Ovary (tissue), 10 donors: ENCODE measurements at regions of chr13 and their contacts with region 1.

Region 1: DNA sequence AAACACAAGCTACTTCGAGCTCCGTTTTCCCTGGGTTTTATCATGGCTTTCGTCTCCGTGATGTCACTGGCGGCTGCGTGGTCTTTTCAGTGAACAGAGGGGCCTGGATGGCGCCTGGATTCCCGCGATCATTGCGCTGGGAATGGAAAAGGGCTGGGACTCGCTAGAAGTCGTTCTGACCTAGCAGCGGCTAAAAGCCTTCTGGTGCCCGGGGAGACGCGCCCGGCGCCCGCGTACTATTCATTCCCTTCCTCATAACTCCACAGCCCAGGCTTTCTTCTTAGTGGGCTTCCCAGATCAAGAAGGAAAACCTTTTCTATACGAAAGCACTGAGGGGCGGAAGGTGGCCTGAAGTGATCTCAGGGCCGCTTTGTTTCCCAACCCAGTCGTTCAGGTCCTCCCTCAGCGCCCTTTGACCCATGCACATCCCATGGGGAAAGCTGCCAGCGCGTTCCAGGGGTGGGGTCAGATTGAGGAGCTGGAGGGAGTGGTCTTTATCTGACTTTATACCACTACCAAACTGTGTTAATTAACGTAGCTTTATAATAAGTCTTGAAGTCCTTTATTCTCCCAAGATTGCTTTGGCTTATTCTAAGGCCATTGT is 96.6 kb downstream of the ELF1 start:
- DNase-seq: peak; percentile 20 to 50 (median 41)
- H3K4me3 ChIP-seq: no peak overlapping the region
- H3K27ac ChIP-seq: no peak overlapping the region
- H3K4me1 ChIP-seq: no peaks in the 10 kb centered on the region
- H3K27me3 ChIP-seq: no peaks in the 10 kb centered on the region
- CTCF ChIP-seq: no peak
- EP300 ChIP-seq: no peak
- POLR2A ChIP-seq: no peak

Region 2: DNA sequence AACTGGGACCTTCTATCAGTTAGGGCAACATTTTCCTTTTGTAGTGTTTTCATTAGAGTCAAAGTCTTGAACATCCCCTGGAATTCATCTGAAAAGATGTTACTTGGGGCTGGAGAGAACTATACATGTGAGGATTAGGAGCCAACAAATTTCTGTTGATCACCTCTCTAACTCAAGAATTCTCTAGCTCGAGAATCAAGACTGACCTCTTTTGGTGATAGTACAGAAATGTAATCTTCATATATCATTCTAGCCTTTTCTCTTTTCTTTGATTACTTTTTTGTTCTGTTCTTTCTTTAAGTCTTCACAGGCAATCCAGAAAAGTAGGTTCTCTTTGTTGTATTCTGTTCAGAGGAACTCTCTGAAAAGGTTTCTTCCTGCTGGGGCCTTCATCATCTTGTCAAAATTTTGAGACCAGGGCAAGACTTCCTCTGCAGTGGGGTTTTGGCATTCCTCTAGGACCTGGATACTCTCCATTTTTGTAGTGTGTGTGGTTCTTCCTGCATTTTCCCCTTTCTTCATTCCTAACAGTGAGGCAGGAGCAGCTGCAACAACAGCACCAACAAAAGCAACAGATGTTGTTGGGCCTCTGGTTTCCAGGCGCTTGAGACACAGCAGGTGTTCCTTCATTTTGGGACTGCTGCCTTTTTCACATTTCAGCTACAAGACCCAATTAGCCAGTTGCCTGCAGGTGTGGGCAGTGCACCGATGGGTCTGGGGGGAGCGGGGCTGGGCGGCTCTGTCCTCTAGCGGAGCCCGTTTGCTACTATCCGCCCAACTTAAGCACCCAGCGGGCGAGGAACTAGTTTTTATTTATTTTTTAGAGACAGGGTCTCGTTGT is 70.4 kb after region 1 on chr13:
- intact Hi-C with region 1: loop called in 1 of 4 experiments (anchors 10 kb)
- DNase-seq: no peak
- H3K4me3 ChIP-seq: no peak overlapping the region
- H3K27ac ChIP-seq: no peak overlapping the region
- H3K4me1 ChIP-seq: peaks cover 6% of the 10 kb centered on the region
- H3K27me3 ChIP-seq: no peaks in the 10 kb centered on the region
- CTCF ChIP-seq: no peak
- EP300 ChIP-seq: no peak
- POLR2A ChIP-seq: no peak

Region 3: DNA sequence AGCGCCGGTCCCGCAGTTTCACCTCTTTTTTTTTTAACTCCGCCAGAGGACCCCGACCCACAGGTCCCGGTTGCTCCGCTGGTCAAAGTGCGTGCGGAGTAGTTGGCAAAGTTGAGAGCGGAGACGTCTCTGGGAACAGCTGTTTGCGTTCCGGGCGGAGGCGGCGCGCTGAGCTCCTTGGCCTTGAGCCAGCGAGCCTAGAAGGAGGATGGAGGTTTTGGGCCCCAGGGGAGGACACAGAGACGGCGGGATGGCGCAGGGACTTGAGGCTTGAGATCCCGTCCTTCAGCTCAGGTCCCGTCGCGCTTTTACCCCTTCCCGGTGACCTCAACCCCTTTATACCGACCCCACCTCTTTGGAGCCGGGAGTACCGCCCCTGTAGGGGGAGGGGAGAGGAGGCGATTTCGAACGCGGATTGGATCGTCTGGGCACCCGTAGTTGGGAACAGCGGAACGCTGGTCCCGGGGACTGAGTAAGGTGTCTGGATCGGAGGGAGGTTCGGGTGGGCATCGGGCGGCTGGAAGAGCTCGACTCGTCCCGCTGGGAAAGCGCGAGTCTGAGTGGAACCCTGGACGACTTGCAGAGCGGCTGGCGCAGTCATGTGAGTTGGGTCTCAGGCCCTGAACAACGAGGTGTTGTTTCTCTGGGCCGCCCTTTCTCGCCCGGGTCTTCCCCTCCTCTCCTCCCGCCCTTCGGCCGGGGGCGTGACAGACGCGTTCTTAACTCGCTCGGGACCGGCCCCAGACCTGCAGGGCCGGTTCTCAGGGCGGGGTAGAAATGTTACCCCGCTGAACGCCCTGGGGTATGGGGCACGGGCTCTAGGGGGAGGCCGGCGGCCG is 138.8 kb after region 1 on chr13 and contains the start of gene WBP4:
- intact Hi-C with region 1: loop called in 2 of 4 experiments (anchors 5 to 10 kb)
- DNase-seq: peak; percentile 95 to 97 (median 96)
- H3K4me3 ChIP-seq: peak within 1 kb of the TSS; percentile 60
- H3K27ac ChIP-seq: peak within 1 kb of the TSS; percentile 97 to 98
- H3K4me1 ChIP-seq: peaks cover 7% of the 10 kb centered on the region
- H3K27me3 ChIP-seq: no peaks in the 10 kb centered on the region
- CTCF ChIP-seq: no peak
- EP300 ChIP-seq: no peak
- POLR2A ChIP-seq: peak; percentile 72
- total RNA-seq, gene WBP4: 7.5 to 10.8 (median 9.8) TPM